Natural killer cell (primary cell): ENCODE measurements at regions of chr3 and their contacts with region 1.

Region 1: GRCh38 chr3:8380904-8381704 is 120.5 kb upstream of the LMCD1 start:
- DNase-seq: no peak
- ATAC-seq: no peak
- H3K4me3 ChIP-seq: no peak overlapping the region
- H3K4me3 Mint-ChIP-seq: no peak overlapping the region
- H3K27ac ChIP-seq: no peak overlapping the region
- H3K27ac Mint-ChIP-seq: no peak overlapping the region
- H3K4me1 ChIP-seq: no peaks in the 10 kb centered on the region
- H3K4me1 Mint-ChIP-seq: peaks cover 4 to 5% of the 10 kb centered on the region in 2 donors
- H3K27me3 ChIP-seq: no peaks in the 10 kb centered on the region
- H3K27me3 Mint-ChIP-seq: no peaks in the 10 kb centered on the region
- CTCF ChIP-seq: no peak

Region 2: DNA sequence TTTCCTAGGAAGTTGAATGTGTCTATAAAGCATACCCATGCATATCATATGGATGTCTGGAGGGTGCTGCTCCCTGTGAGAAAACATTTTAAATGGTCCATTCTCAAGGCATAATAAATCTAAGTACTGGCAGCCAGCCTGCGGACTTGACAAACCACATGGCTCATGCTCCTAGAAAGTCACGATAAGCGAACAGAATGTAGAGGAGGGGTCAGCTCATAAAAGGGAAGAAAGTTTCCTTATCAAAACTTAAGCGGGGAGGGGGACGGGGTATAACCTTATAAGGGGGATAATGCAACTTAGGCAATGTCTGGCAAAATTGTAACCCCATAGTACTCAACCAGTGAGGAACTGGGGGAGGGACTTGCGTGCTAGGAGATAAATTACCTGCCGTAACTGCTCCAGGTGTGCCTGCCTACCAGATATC is 39.3 kb before region 1 on chr3:
- intact Hi-C with region 1: loop called (anchors 5 kb)
- DNase-seq: no peak
- ATAC-seq: no peak
- H3K4me3 ChIP-seq: no peak overlapping the region
- H3K4me3 Mint-ChIP-seq: no peak overlapping the region
- H3K27ac ChIP-seq: no peak overlapping the region
- H3K27ac Mint-ChIP-seq: no peak overlapping the region
- H3K4me1 ChIP-seq: no peaks in the 10 kb centered on the region
- H3K4me1 Mint-ChIP-seq: peaks cover 0 to 25% of the 10 kb centered on the region in 2 donors
- H3K27me3 ChIP-seq: no peaks in the 10 kb centered on the region
- H3K27me3 Mint-ChIP-seq: no peaks in the 10 kb centered on the region
- CTCF ChIP-seq: no peak

Region 3: GRCh38 chr3:8482960-8483665 is 102.0 kb after region 1 on chr3:
- intact Hi-C with region 1: no loop called
- DNase-seq: no peak
- ATAC-seq: no peak
- H3K4me3 ChIP-seq: no peak overlapping the region
- H3K4me3 Mint-ChIP-seq: no peak overlapping the region
- H3K27ac ChIP-seq: no peak overlapping the region
- H3K27ac Mint-ChIP-seq: no peak overlapping the region
- H3K4me1 ChIP-seq: no peaks in the 10 kb centered on the region
- H3K4me1 Mint-ChIP-seq: no peaks in the 10 kb centered on the region
- H3K27me3 ChIP-seq: no peaks in the 10 kb centered on the region
- H3K27me3 Mint-ChIP-seq: peaks cover 0 to 6% of the 10 kb centered on the region in 2 donors
- CTCF ChIP-seq: no peak